ENCODE measurements at regions of chr6 and their contacts with region 1.

Region 1: GRCh38 chr6:131116749-131117360 is 18.4 kb upstream of the AKAP7 start:
- DNase-seq: peak; percentile 69
- H3K4me3 ChIP-seq: no peak overlapping the region
- H3K27ac ChIP-seq: no peak overlapping the region
- H3K4me1 ChIP-seq: no peaks in the 10 kb centered on the region
- H3K27me3 ChIP-seq: no peaks in the 10 kb centered on the region
- CTCF ChIP-seq: peak; percentile 10 to 23
- POLR2A ChIP-seq: no peak

Region 2: DNA sequence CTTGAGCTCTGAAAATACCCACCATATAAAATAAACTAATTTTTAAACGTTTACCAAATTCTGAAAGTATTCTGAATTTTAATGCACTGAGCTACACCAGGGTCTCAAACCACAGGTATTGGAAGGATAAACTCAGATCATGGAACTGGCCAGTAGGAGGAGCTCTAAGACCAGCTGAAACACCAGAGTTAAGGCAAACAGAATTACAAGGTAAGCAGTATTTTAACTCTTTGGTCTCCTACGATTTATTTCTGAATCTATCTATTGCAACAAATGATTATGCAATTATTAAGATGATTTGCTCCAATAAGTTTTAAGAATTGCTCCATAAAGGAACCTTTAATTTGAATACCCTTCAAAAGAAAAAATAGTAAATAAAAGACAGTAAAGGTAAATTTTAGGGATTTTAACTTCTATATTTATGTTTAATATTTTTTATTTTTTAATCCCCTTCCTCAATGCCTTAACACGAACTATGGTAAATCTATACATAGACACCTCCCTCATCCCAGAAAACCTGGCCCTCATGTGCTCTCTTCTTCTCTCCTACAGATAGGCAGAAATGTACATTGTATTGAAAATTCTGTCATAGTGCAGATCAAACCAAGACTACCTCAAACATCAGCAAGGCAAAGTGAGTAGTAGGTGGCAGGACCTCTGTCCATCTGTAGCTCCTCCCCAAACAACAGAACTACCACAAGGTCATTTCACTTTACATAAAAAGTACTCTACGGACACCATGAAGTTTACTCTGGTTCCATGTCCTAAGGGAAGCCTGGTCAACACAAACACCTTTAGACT is 231.3 kb before region 1 on chr6:
- CTCF ChIA-PET with region 1: interaction called, 436 read pairs
- POLR2A ChIA-PET with region 1: no interaction called
- dilution Hi-C with region 1: no loop called
- intact Hi-C with region 1: loop called (anchors 1 kb)
- DNase-seq: peak; percentile 79
- H3K4me3 ChIP-seq: no peak overlapping the region
- H3K27ac ChIP-seq: no peak overlapping the region
- H3K4me1 ChIP-seq: peaks cover 5% of the 10 kb centered on the region
- H3K27me3 ChIP-seq: no peaks in the 10 kb centered on the region
- CTCF ChIP-seq: peak; percentile 54 to 65
- POLR2A ChIP-seq: no peak

Region 3: DNA sequence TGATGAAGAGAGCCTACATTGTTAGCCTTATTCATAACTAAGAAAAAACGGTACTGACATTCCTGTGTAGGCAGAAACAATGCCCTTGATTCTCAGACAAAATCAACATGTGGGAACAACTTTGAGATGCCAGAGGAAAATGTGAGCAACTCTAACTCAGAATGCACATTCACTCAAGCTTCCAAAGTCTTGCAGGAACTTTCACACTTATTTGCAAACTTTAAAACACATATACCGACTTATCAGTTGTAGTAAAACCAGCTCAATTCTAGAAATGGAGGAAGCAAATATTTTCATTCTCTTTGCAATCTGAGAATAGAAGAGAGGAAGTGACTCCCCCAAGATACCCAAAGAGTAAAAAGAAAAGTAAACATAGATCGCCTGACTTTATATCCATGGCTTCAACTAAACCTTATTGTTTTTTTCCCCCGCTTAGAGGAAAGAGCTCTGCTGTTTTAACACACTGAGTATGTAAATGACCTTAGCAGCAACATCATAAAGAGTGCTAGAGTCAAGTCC is 171.4 kb before region 1 on chr6:
- CTCF ChIA-PET with region 1: interaction called, 7 read pairs
- POLR2A ChIA-PET with region 1: no interaction called
- dilution Hi-C with region 1: no loop called
- intact Hi-C with region 1: loop called (anchors 2 kb)
- DNase-seq: peak; percentile 89
- H3K4me3 ChIP-seq: peak overlapping the region in 1 of 3 experiments; percentile 20
- H3K27ac ChIP-seq: peak overlapping the region; percentile 69
- H3K4me1 ChIP-seq: peaks cover 30% of the 10 kb centered on the region
- H3K27me3 ChIP-seq: no peaks in the 10 kb centered on the region
- CTCF ChIP-seq: no peak
- POLR2A ChIP-seq: no peak

Region 4: GRCh38 chr6:131013495-131013894 is 103.4 kb before region 1 on chr6:
- CTCF ChIA-PET with region 1: interaction called, 13 read pairs
- POLR2A ChIA-PET with region 1: interaction called, 3 read pairs
- dilution Hi-C with region 1: no loop called
- intact Hi-C with region 1: loop called (anchors 5 kb)
- DNase-seq: peak; percentile 91
- H3K4me3 ChIP-seq: no peak overlapping the region
- H3K27ac ChIP-seq: peak overlapping the region; percentile 32
- H3K4me1 ChIP-seq: peaks cover 38% of the 10 kb centered on the region
- H3K27me3 ChIP-seq: no peaks in the 10 kb centered on the region
- CTCF ChIP-seq: no peak
- POLR2A ChIP-seq: no peak

Region 5: DNA sequence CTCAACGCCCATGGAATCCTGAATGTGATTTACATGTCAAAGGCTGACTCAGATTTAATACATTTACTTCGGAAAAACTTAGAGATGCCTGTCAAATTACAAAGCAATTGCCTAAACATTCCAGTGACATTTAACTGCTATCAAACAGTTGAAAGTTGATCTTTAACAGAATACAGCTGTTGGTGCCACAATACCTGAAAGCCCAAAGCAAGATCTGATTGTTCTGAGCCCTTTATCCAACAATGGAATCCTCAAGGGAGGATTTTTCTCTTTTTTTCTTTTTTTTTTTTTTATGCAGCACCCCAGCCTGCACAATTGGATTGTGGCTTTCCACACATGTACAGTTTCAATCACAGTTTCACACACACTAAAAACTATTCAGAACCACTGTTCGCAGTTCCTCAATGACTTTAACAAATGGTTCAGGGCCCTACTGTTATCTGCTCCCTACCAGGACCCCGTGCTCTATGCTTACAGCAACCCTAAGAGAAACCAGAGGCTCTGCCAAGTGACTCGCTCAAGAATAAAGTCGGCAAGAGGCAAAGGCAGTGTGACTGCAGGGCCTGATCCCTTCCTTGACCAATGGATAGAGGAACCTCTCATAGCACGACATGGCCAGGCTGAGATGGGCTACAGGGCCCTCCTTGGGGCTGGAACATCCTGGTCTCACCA is 87.1 kb before region 1 on chr6:
- CTCF ChIA-PET with region 1: no interaction called
- POLR2A ChIA-PET with region 1: no interaction called
- dilution Hi-C with region 1: no loop called
- intact Hi-C with region 1: no loop called
- DNase-seq: no peak
- H3K4me3 ChIP-seq: no peak overlapping the region
- H3K27ac ChIP-seq: no peak overlapping the region
- H3K4me1 ChIP-seq: no peaks in the 10 kb centered on the region
- H3K27me3 ChIP-seq: no peaks in the 10 kb centered on the region
- CTCF ChIP-seq: no peak
- POLR2A ChIP-seq: no peak

Region 6: DNA sequence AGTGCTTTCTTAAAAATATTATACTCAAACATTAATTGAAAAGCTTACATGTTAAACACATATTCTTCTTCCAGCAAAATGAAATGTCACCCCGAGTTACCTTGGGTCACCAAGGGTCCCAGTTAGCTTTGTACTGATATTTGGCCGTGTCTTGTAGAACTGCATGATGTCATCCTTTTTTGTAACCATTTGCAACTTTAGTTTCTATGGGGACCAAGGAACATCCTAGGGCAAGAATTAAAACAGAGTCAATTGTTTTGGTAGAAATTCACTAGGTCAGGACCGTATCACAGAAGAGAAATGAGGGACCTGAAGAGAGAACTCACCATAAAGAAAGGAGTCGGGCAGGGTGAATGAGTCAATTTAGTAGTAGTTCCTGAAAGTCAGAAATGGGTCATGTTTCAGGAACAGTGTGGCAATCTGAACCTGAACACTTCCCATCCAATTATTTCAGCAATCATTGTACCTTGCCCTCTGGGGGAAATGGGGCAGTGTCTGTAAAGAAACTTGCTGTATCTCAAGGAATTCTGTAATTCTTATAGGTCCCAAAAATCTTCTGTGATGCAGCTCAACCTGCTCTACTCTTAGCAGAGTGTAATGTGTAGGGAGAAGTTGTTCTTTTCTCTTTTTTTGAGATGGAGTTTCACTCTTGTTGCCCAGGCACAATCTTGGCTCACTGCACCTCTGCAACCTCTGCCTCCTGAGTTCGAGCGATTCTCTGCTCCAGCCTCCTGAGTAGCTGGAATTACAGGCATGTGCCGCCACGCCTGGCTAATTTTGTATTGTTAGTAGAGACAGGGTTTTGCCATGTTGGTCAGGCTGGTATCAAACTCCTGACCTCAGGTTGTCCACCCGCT is 13.1 kb after region 1 on chr6:
- CTCF ChIA-PET with region 1: interaction called, 14 read pairs
- POLR2A ChIA-PET with region 1: no interaction called
- dilution Hi-C with region 1: no loop called
- intact Hi-C with region 1: no loop called
- DNase-seq: no peak
- H3K4me3 ChIP-seq: no peak overlapping the region
- H3K27ac ChIP-seq: no peak overlapping the region
- H3K4me1 ChIP-seq: peaks cover 4% of the 10 kb centered on the region
- H3K27me3 ChIP-seq: no peaks in the 10 kb centered on the region
- CTCF ChIP-seq: no peak
- POLR2A ChIP-seq: no peak

Region 7: DNA sequence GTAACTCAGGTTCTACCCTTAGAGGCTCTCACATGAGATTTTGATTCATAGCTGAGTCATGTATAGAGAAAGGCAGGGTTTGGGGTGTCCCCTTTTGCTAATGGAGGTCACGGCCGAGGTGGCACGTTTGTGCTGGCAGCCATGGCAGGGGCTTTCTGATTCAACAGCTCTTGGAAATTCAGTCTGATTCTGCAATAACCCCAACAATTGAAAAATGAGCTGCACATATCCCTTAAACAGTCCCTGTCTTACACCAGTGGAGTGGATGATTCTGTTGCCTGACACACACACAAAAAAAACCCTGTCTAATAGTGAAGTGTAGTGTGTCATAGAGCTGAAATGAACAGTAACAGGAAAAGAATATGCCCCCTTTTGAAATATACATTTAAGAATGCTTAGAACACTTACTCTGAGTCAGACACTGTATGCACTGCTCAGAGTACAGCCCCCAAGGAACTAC is 415.8 kb after region 1 on chr6:
- CTCF ChIA-PET with region 1: interaction called, 16 read pairs
- POLR2A ChIA-PET with region 1: no interaction called
- dilution Hi-C with region 1: no loop called
- intact Hi-C with region 1: loop called (anchors 5 kb)
- DNase-seq: no peak
- H3K4me3 ChIP-seq: no peak overlapping the region
- H3K27ac ChIP-seq: no peak overlapping the region
- H3K4me1 ChIP-seq: no peaks in the 10 kb centered on the region
- H3K27me3 ChIP-seq: peaks cover 0 to 6% of the 10 kb centered on the region in 2 experiments
- CTCF ChIP-seq: no peak
- POLR2A ChIP-seq: no peak

Measured in endothelial cell of umbilical vein (primary cell).